ENCODE measurements at regions of chr16 and their contacts with region 1.

Region 1: DNA sequence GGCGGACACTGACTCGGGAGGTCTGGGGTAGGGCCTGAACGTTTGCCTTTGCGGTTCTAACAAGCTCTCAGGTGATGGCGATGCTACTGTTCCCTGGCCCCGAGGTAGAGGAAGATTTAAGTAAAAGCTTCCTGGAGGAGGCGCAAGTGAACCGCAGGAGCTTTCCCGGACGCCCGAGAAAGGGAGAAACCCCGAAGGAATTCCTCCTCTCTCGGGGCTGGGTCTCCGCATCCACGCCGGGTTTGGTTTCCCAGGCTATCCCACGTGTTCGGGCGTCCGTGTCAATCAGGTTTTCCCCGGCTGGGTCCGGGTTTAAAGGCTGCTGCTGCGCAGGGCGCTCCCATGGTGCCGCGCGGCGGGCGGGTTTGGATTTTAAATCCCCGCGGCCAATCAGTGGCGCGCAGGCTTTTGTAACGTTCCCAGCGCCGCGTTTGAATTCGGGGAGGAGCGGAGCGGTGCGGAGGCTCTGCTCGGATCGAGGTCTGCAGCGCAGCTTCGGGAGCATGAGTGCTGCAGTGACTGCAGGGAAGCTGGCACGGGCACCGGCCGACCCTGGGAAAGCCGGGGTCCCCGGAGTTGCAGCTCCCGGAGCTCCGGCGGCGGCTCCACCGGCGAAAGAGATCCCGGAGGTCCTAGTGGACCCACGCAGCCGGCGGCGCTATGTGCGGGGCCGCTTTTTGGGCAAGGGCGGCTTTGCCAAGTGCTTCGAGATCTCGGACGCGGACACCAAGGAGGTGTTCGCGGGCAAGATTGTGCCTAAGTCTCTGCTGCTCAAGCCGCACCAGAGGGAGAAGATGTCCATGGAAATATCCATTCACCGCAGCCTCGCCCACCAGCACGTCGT is at the start of gene PLK1:
- DNase-seq: peak; percentile 91
- H3K4me3 Mint-ChIP-seq: peak within 1 kb of the TSS; percentile 97
- H3K27ac Mint-ChIP-seq: peak within 1 kb of the TSS; percentile 78
- H3K4me1 Mint-ChIP-seq: peaks cover 45% of the 10 kb centered on the region
- H3K27me3 Mint-ChIP-seq: no peaks in the 10 kb centered on the region
- total RNA-seq, gene PLK1: 102 to 104 TPM

Region 2: DNA sequence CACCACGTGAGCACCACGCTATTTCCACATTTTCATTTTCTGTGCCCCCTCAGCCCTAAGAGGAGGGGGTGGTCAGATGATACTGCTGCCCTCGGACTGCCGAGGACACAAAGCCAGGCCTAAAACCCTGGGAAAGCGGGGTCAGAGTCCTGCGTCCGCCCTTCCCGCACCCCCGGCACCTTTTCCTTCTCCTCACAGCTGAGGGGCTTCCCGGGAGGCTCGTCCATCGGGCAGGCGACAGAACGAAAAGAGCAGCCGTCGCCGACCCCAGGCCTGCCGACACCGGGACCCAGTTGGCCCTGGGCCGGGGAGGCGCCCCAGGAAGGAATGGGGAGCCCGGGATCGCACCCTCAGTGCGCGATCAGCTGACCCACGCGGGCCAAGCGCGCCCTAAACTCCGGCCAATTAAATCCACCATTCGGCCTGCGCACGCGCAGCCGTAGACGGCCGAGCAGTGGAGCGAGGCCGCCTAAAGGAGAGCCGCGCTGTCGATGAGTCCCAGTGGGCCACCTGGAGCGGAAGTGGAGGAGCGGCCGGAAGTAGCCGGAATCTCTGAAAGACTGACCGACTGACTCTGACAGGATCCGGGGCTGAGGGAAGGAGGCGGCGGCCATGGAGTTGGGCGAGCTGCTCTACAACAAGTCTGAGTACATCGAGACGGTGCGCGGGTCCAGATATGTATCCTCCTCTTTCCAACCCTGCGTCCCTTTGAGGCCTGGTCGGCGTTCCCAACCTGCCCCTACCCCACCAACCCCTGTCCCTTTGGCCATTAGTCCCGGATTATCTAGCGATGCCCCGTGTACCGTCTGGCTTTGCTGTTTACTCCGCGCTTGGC is 37.5 kb before region 1 on chr16 and contains the starts of genes DCTN5 and PALB2:
- CTCF ChIA-PET with region 1: interaction called, 4 read pairs
- POLR2A ChIA-PET with region 1: interaction called, 38 read pairs
- DNase-seq: peak; percentile 90
- H3K4me3 Mint-ChIP-seq: peak within 1 kb of the TSS; percentile 98
- H3K27ac Mint-ChIP-seq: peak within 1 kb of the TSS; percentile 95
- H3K4me1 Mint-ChIP-seq: peaks cover 45% of the 10 kb centered on the region
- H3K27me3 Mint-ChIP-seq: no peaks in the 10 kb centered on the region
- total RNA-seq, gene DCTN5: 64.9 to 68.8 TPM
- total RNA-seq, gene PALB2: 16.8 to 17.0 TPM

Region 3: DNA sequence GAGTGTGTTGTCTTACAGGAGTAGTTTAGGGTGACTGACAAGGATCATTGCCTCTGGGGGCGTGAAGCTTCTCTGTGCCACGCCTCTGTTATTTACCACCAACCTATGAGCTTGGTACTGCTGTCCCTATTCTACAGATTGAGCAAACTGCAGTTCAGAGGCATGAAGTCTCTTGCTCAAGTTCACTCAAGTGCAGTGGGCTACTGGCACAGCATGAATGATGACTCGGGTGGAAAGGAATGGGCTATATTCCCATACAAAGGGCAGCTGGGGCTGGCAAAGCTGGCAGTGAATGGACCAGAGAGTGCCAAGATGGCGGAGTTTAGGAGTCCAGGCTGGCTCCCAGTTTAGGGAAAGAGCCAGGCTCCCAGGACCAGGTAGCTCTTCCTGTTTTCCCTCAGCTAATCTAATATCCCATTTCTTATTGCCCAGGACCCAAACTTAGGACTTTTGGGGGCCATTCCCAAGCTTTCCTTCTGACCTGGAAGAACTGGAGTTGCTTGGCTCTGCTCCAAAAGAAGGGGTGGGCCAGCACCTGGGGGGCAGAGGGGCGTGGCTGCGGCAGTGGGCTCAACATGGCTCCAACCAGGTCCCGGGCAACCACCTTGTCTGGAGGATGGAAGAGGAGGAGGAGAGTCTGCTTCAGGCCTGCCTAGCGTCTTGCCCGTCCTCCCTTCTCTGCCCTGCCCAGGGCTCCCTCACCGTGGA is 13.0 kb after region 1 on chr16:
- CTCF ChIA-PET with region 1: no interaction called
- POLR2A ChIA-PET with region 1: interaction called, 28 read pairs
- DNase-seq: no peak
- H3K4me3 Mint-ChIP-seq: no peak overlapping the region
- H3K27ac Mint-ChIP-seq: no peak overlapping the region
- H3K4me1 Mint-ChIP-seq: peaks cover 3% of the 10 kb centered on the region
- H3K27me3 Mint-ChIP-seq: no peaks in the 10 kb centered on the region

Measured in activated CD4-positive, alpha-beta memory T cell treated with anti-CD3 and anti-CD28 coated beads, Interleukin-2, amount 10 ng/mL, durations not matched to agents 7 days and 5 days (primary cell).